ENCODE measurements at regions of chr12 and their contacts with region 1.

Region 1: GRCh38 chr12:110349531-110350151 is 53.9 kb downstream of the ANAPC7 start:
- DNase-seq: peak; percentile 73 to 96 (median 94)
- H3K4me3 ChIP-seq: peak overlapping the region in 5 of 7 experiments; percentile 20 to 59 (median 44)
- H3K27ac ChIP-seq: peak overlapping the region; percentile 37 to 71
- H3K4me1 ChIP-seq: peaks cover 24 to 76% (median 72%) of the 10 kb centered on the region in 4 experiments
- H3K27me3 ChIP-seq: no peaks in the 10 kb centered on the region

Region 2: GRCh38 chr12:110338754-110339153 is 10.9 kb before region 1 on chr12:
- CTCF ChIA-PET with region 1: interaction called, 31 read pairs
- POLR2A ChIA-PET with region 1: no interaction called
- DNase-seq: peak; percentile 60 to 80 (median 72)
- H3K4me3 ChIP-seq: no peak overlapping the region
- H3K27ac ChIP-seq: no peak overlapping the region
- H3K4me1 ChIP-seq: no peaks in the 10 kb centered on the region
- H3K27me3 ChIP-seq: no peaks in the 10 kb centered on the region

Region 3: DNA sequence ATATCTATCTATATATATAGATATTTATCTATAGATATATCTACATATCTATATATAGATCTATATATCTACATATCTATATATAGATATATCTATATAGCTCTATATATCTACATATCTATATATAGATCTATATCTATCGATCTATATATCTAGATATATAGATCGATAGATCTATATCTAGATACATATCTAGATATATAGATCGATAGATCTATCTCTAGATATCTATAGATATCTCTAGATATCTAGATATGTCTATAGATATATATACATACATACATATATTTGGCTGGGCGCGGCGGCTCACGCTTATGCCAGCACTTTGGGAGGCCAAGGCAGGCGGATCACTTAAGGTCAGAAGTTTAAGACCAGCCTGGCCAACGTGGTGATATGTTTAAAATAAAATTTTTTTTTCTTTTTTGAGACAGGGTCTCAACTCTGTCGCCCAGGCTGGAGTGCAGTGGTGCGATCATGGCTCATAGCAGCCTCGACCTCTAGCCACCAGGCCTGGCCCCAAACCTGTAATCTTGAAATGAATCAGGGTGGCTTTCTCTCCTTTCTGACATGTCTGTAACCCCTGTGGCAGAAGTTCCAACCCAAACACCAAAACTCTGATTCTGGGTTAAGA is 82.4 kb after region 1 on chr12:
- CTCF ChIA-PET with region 1: interaction called, 14 read pairs
- POLR2A ChIA-PET with region 1: interaction called, 9 read pairs
- DNase-seq: no peak
- H3K4me3 ChIP-seq: peak overlapping the region in 3 of 7 experiments; percentile 63 to 74 (median 68)
- H3K27ac ChIP-seq: peak overlapping the region in 1 of 2 experiments; percentile 71
- H3K4me1 ChIP-seq: peaks cover 0 to 3% (median 0%) of the 10 kb centered on the region in 4 experiments
- H3K27me3 ChIP-seq: no peaks in the 10 kb centered on the region

Measured in common myeloid progenitor, CD34-positive (primary cell).